ENCODE measurements at regions of chr19 and their contacts with region 1.

Region 1: DNA sequence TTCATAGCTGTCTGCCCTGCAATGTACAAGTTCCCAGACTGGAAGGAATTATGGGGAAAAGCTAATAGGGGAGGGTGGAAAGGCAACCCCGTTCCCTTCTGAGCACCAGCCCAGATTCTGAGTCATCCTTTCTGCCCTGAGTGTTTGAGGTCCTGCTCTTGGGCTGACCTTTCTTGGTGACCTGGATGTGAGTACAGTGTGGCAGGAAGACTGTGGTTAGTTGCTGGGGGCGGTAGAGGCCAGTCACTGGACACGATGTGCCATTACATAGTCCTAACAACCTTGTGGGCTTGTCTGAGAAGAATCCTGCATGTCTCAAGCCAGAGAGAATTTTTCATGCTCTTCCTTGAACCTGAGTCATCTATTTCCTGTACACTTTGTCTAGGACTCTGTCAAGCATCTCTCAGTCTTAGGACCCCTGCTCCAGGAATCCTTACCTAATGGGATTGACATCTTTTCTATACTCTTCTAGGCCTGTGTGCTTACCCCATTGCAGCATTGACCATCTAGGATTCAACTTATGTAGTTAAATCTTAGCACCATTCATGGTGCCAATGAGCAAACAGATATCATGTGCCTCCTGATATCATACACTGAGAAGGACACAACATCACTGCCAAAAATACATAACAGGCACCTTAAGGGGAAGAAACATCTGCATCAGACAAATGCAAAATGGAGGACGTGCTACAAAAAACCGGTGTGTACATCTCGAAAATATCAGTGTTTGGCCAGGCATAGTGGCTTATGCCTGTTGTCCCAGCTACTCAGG is 8.1 kb upstream of the ANGPTL4 start:
- DNase-seq: peak; percentile 63 to 83
- H3K4me3 ChIP-seq: no peak overlapping the region
- H3K27ac ChIP-seq: peak overlapping the region; percentile 39 to 49
- H3K4me1 ChIP-seq: peaks cover 0 to 44% (median 20%) of the 10 kb centered on the region in 4 donors
- H3K27me3 ChIP-seq: no peaks in the 10 kb centered on the region
- CTCF ChIP-seq: no peak

Region 2: GRCh38 chr19:8396563-8397203 is 40.9 kb after region 1 on chr19:
- intact Hi-C with region 1: loop called (anchors 1 kb)
- DNase-seq: no peak
- H3K4me3 ChIP-seq: no peak overlapping the region
- H3K27ac ChIP-seq: no peak overlapping the region
- H3K4me1 ChIP-seq: peaks cover 4 to 67% (median 56%) of the 10 kb centered on the region in 4 donors
- H3K27me3 ChIP-seq: no peaks in the 10 kb centered on the region
- CTCF ChIP-seq: peak; percentile 61 to 63

Region 3: DNA sequence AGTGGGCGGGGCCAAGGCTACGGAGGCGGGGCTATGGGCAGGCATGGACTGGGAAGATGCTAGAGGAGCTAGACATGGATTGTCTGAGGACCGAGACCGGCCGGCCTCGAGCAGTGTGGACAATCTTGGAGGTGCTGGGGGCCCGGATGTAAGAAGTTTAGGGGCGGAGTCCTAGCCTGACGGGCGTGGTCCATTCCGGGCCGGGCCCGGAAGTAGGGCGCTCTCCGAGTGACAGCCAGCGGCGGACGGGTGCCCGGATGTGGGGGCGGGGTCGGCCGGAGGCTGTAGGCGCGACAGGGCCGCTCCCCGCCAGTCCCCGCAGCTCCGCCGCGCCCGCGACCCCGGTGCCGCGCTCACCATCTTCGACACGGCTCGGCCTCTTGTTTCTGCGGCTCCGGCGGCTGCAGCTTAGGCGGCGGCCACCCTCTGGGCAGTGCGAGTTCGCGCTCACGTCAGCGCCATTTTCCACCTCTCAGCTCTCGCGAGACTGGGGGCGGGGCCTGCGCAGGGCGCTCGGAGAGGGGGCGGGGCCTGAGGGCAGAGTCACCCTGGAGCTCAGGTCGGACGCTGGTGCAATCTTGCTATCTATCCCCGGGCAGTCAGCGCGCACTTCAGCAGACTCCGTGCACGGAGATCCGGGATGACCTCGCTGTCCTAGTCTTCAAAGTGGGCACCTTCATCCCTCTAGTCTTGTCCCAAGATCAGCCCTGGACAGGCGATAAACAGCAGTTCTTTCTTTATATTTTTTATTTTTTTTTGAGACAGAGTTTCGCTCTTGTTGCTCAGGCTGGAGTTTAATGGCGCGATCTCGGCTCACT is 158.1 kb after region 1 on chr19 and contains the start of gene ZNF414:
- intact Hi-C with region 1: loop called (anchors 5 kb)
- DNase-seq: peak; percentile 94 to 98
- H3K4me3 ChIP-seq: peak within 1 kb of the TSS; percentile 78 to 79
- H3K27ac ChIP-seq: peak within 1 kb of the TSS; percentile 96 to 99
- H3K4me1 ChIP-seq: peaks cover 0 to 30% (median 22%) of the 10 kb centered on the region in 4 donors
- H3K27me3 ChIP-seq: no peaks in the 10 kb centered on the region
- CTCF ChIP-seq: no peak

Measured in tibial artery (tissue), 4 donors.